Spleen (tissue), 13 donors: ENCODE measurements at regions of chr12 and their contacts with region 1.

Region 1: GRCh38 chr12:22083167-22083566 is 37.1 kb downstream of the CMAS start:
- DNase-seq: no peak
- H3K4me3 ChIP-seq: no peak overlapping the region
- H3K27ac ChIP-seq: no peak overlapping the region
- H3K4me1 ChIP-seq: no peaks in the 10 kb centered on the region
- H3K27me3 ChIP-seq: no peaks in the 10 kb centered on the region
- CTCF ChIP-seq: peak in 4 of 11 experiments; percentile 19 to 32 (median 26)
- POLR2A ChIP-seq: no peak

Region 2: GRCh38 chr12:21788089-21788983 is 294.8 kb before region 1 on chr12:
- intact Hi-C with region 1: no loop called
- DNase-seq: no peak
- H3K4me3 ChIP-seq: no peak overlapping the region
- H3K27ac ChIP-seq: no peak overlapping the region
- H3K4me1 ChIP-seq: peaks cover 0 to 10% (median 0%) of the 10 kb centered on the region in 6 donors
- H3K27me3 ChIP-seq: no peaks in the 10 kb centered on the region
- CTCF ChIP-seq: no peak
- POLR2A ChIP-seq: no peak

Region 3: DNA sequence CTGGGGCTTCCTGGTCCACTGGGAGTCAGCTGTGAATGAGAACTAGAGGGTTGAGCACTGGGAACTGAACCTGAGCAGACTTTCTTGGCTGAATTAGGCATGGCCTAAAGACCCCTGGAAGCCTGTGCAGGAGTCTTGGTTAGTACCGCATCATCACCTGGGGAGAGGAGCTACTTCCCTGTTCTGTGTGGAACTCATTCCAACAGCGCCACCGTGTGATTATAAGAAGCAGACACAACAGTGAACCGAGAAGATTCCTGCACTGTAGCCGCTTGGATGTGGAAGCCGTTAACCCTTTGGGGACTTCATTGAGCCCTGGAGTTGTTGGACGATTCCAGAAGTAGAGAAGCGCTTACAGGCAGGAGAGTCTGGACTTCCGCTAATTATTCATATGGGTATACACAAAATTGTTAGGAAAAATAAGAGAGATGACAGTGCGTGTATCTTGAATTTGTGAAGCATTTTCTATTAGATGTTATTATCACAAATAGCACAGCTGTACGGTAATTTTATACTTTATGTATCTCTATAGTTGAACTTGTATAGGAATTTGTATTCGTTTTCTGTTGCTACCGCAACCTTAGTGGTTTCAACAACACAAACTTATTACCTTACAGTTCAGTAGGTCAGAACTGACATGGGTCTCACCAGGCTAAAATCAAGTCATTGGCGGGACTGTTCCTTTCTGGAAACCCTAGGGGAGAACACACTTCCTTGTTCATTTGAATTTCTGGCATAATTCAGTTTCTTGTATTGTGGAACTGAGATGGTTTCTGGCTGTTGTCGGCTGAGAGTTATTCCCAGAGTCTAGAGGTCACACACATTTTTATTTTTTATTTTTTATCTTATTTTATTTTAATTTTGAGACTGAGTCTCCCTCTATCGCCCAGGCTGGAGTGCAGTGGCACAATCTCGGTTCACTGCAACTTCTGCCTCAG is 360.5 kb after region 1 on chr12:
- intact Hi-C with region 1: loop called (anchors 10 kb)
- DNase-seq: peak; percentile 70
- H3K4me3 ChIP-seq: no peak overlapping the region
- H3K27ac ChIP-seq: no peak overlapping the region
- H3K4me1 ChIP-seq: peaks cover 0 to 7% (median 3%) of the 10 kb centered on the region in 6 donors
- H3K27me3 ChIP-seq: no peaks in the 10 kb centered on the region
- CTCF ChIP-seq: peak; percentile 53 to 79 (median 65)
- POLR2A ChIP-seq: no peak